Cardiac septum (tissue), 1 donor: ENCODE measurements at regions of chr6 and their contacts with region 1.

Region 1: DNA sequence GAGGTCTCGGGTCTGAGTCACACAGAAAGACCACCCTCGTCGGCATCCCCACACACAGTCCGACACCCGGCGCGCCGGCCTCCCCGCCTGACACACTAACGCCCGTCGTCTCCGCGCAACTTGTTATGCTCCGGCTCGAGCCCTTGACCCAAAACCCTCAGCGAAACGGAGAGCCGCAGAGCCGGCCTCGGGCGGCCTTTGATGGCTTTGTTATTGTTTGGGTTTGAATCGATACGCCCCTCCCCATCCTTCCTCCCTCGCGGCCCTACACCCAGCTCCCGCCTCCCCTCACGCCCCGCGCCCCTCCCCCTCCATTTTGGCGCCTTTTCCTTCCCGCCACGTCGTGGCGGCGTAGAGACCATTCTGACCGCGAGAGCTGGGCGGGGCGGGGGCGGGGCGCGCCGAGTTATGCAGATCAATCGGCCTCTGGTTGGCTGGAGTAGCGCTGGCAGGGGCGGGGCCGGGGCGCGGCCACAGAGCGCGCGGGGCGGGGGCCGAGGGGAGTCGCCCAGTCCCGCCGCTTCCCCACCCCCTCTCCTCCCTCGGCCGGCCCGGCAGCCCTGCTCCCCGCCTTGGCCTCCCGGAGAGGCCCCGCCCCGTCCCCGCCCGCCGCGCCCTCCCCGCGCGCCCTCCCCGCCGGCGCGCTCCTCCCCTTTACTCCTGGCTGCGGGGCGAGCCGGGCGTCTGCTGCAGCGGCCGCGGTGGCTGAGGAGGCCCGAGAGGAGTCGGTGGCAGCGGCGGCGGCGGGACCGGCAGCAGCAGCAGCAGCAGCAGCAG is at the start of gene PIM1:
- DNase-seq: peak; percentile 100
- total RNA-seq, gene PIM1: 16.6 TPM

Region 2: GRCh38 chr6:36885461-36886401 is 284.0 kb before region 1 on chr6 and contains the start of gene C6orf89:
- intact Hi-C with region 1: loop called (anchors 10 kb)
- DNase-seq: peak; percentile 99
- total RNA-seq, gene C6orf89: 49.2 TPM

Region 3: DNA sequence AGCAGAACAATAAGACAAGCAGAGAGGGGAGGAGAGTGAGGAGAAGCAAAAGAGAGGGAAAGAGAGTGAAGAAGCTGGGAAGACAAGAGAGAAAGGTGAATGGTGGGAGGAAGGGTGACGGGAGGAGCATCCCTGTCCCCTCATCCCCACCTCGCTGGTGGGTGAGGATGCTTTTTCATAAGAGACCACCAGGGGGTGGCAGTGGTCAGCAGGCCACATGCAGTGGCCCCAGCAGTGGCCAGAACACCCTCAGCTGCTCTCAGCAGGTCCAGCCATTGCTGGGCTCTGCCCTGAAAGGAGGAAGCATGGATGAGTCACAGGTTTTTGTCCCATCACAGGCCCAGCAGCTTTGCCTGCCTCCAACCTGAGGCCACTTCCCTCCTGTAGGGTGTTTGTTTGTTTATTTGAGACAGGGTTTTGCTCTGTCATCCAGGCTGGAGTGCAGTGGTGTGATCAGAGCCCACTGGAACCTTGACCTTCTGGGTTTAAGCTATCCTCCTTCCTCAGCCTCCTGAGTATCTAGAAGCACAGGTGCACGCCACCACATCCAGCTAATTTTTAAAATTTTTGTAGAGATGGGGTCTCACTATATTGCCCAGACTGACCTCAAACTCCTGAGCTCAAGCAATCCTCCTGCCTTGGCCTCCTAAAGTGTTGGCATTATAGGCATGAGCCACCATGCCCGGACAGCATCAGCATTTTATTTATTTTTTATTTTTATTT is 140.3 kb before region 1 on chr6:
- intact Hi-C with region 1: loop called (anchors 2 kb)
- DNase-seq: peak; percentile 95

Region 4: DNA sequence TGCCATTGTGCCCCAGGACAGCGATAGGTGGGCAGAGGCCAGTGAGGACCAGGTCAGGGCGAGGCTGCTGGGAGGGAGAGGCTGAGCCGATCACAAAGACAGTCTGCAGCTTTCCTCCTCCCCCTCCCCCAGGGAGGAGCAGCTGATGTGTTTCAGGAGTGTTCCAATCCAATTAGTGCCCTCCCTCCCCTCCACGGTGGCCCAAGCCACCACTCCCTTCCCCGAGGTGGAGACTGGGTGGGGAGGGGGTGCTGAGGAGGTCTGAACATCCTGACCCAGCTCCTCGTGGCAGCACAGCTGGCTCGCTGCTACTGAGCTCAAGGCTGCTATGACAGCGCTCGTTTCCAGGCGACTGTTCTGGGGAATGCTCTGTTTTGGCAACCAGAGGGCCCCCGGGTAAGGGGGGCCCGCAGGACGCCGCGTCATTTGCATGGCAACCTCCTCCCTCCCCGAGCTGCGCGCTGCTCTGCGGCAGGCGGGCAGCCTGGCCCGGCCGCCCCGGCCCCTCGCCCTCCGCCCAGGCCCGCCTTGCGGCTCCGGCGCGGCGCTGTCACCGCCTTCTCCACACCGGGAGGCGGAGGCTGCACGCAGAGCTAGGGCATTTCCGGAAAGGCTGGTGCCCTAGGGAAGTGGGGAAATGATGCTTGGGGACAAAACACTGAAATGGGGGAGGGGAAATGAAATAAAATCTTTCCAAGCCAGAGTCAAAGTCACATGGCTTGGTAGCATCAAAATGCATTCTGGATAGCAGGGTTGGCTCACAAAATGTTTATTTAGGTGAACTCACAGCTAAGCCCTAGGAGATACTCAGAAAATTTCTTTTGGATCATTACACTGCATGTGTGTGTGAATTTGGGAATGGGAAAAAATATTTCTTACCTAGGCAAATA is 67.2 kb before region 1 on chr6:
- intact Hi-C with region 1: loop called (anchors 2 kb)
- DNase-seq: peak; percentile 93

Region 5: GRCh38 chr6:37207903-37208456 is 38.3 kb after region 1 on chr6:
- intact Hi-C with region 1: loop called (anchors 5 kb)
- DNase-seq: peak; percentile 94